ENCODE measurements at regions of chr2 and their contacts with region 1.

Region 1: DNA sequence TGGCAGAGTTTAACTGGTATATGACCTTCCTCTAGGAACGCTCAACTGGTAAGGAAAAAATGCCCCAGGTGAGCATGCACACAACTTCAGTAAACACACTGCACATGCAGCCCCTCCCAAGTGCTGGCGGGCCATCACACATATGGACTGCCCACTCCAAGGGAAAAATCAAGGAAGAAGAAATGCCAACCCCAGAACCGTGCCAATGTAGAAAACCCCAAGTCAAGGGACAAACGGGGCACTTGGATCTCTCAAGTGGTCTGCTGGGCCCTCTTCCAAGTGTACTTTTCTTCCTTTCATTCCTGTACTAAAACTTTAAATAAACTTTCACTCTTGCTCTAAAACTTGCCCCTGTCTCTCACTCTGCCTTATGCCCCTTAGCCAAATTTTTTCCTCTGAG is 76.4 kb upstream of the ACVR1 start:
- DNase-seq: no peak
- H3K4me3 Mint-ChIP-seq: no peak overlapping the region
- H3K27ac Mint-ChIP-seq: no peak overlapping the region
- H3K4me1 Mint-ChIP-seq: peaks cover 23% of the 10 kb centered on the region
- H3K27me3 Mint-ChIP-seq: no peaks in the 10 kb centered on the region
- CTCF ChIP-seq: no peak

Region 2: DNA sequence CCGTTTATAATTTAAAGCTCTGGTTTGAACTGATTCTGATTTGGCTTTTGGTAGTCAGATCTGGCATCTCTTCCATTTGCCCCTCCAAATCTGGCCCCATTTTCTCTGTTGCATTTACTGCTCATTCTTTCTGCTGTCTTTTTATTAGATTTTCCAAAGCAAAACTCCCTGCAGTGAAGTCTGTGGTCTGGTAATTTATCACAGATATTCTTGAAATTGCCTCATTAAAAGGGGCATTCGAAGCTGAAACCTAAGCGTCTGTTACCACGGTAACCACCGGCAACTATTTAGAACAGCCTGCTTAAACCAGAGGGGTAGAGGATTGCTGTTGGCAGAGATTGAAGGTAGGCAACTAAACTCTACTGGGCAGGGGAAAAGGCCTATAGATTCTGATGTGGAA is 37.6 kb after region 1 on chr2:
- CTCF ChIA-PET with region 1: interaction called, 3 read pairs
- intact Hi-C with region 1: loop called (anchors 5 kb)
- DNase-seq: no peak
- H3K4me3 Mint-ChIP-seq: no peak overlapping the region
- H3K27ac Mint-ChIP-seq: no peak overlapping the region
- H3K4me1 Mint-ChIP-seq: no peaks in the 10 kb centered on the region
- H3K27me3 Mint-ChIP-seq: no peaks in the 10 kb centered on the region
- CTCF ChIP-seq: no peak

Region 3: GRCh38 chr2:158497486-158497885 is 544.9 kb after region 1 on chr2:
- CTCF ChIA-PET with region 1: no interaction called
- intact Hi-C with region 1: no loop called
- DNase-seq: peak; percentile 22
- H3K4me3 Mint-ChIP-seq: peak overlapping the region; percentile 14
- H3K27ac Mint-ChIP-seq: peak overlapping the region; percentile 90
- H3K4me1 Mint-ChIP-seq: peaks cover 76% of the 10 kb centered on the region
- H3K27me3 Mint-ChIP-seq: no peaks in the 10 kb centered on the region
- CTCF ChIP-seq: no peak

Measured in Calu3 (cell line).